WTC11 (cell line): ENCODE measurements at regions of chr10 and their contacts with region 1.

Region 1: DNA sequence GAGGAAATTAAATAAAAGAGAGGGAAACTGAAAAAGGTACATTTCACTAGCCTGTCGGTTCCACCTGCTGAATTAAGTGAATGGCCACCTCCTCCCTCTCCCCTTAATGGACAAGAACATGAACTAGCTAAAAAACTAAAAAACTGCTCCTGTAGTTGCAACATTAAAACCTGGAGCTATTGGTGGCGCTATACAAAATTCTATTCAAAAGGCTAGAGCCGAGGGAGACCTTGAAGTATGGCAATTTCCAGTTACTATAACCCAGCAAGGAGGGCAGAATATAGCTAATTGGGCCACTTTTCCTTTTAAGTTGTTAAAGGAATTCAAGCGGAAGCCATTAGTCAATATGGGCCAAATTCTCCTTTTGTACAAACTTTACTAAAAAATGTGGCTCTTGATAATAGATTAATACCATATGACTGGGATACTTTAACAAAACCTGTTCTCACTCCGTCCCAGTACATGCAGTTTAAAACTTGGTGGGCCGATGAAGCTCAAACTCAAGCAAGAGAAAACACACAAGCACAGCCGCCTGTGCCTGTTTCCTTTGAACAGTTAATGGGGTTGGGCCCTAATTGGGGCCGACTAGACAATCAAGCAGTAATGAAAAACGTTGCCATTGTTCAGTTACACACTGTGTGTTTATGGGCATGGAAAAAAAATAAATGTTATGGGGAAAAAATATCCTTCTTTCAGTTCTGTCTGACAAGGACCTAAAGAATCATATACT is 6.5 kb upstream of the CHST3 start:
- DNase-seq: no peak
- ATAC-seq: no peak
- H3K4me3 Mint-ChIP-seq: no peak overlapping the region
- H3K27ac Mint-ChIP-seq: no peak overlapping the region
- H3K4me1 Mint-ChIP-seq: peaks cover 11% of the 10 kb centered on the region
- H3K27me3 Mint-ChIP-seq: peaks cover 17% of the 10 kb centered on the region
- CTCF ChIP-seq: no peak

Region 2: GRCh38 chr10:71945819-71946474 is 11.8 kb before region 1 on chr10:
- CTCF ChIA-PET with region 1: interaction called, 27 read pairs
- POLR2A ChIA-PET with region 1: no interaction called
- DNase-seq: no peak
- ATAC-seq: no peak
- H3K4me3 Mint-ChIP-seq: no peak overlapping the region
- H3K27ac Mint-ChIP-seq: no peak overlapping the region
- H3K4me1 Mint-ChIP-seq: no peaks in the 10 kb centered on the region
- H3K27me3 Mint-ChIP-seq: peaks cover 21% of the 10 kb centered on the region
- CTCF ChIP-seq: no peak

Region 3: GRCh38 chr10:71974489-71975021 is 16.8 kb after region 1 on chr10:
- CTCF ChIA-PET with region 1: interaction called, 21 read pairs
- POLR2A ChIA-PET with region 1: no interaction called
- DNase-seq: no peak
- ATAC-seq: no peak
- H3K4me3 Mint-ChIP-seq: no peak overlapping the region
- H3K27ac Mint-ChIP-seq: no peak overlapping the region
- H3K4me1 Mint-ChIP-seq: peaks cover 20% of the 10 kb centered on the region
- H3K27me3 Mint-ChIP-seq: no peaks in the 10 kb centered on the region
- CTCF ChIP-seq: no peak

Region 4: DNA sequence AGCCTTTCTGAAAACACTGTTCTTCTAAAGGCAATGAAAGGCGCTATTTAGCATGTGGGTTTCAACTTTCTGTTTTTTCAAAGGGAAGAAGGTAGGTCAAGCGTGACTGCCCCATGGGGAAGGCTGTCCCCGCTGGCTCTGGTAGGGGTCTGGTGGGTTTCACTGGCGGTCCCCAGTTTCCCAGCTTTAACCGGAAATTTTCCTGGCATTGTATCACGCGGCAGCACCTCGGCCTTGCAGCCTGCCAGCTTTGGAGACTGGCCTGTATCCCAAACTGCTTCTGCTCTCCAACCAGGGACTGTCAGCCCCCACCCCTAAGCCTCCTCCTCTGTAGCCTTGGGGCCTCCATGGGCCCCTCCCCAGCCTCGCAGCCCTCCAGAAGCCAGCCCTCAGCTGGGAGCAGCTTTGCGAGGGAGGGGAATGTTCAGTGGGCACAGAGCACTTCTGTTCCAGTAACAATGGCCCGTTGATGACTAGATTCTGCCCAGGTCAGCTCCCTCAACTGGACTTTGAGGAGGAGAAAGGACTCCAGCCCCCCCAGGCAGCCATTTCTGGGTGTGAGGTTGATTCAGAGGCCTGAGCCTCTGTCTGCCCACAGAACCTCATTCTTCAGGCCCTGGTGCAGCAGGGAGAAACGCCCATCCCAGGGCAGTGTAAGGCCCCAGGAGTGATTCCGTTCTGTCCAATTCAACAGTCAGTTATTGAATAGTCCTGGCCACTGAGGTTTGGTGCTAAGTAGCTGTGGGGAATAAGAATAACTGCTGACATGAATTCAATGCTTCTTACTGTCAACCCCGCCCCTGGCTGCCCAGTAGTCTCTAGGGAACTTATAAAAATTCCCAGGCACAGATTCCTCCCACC is 23.5 kb after region 1 on chr10:
- CTCF ChIA-PET with region 1: interaction called, 21 read pairs
- POLR2A ChIA-PET with region 1: no interaction called
- DNase-seq: no peak
- ATAC-seq: no peak
- H3K4me3 Mint-ChIP-seq: no peak overlapping the region
- H3K27ac Mint-ChIP-seq: no peak overlapping the region
- H3K4me1 Mint-ChIP-seq: peaks cover 27% of the 10 kb centered on the region
- H3K27me3 Mint-ChIP-seq: no peaks in the 10 kb centered on the region
- CTCF ChIP-seq: no peak

Region 5: DNA sequence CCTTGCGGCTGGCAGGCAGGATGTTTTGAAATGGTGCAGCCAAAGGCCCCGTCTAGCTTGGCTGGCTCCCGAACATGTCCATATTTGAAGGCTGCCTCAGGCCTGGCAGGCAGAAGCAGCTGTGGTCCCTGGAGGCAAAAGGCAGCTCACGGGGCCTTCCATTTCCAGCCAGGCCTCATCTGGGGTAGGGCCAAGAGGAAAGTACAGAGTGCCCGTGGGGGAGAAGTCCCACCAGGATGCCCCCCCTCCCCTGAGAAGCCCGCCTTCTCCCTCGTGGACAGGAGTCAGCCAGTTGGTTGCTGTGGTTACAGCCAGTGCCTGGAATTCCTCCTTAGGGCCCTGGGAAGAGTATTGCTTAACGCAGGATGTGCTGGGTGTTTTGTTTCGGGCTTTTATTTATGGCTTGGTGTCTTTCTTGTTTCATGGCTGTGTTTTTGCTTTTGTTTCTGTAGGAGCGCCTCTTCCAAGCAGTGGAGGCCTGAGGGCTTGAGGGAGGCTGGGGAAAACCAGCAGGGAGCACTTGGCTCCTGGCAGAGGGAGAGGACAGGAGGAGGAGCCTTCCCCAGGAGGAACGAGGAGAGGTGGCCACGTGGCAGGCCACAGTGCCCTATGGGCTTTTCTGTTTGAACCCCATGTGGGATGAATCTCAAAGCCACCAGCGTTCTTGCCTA is 51.8 kb after region 1 on chr10:
- CTCF ChIA-PET with region 1: no interaction called
- POLR2A ChIA-PET with region 1: no interaction called
- DNase-seq: no peak
- ATAC-seq: peak; percentile 24; the same call in 1 of the 2 replicates
- H3K4me3 Mint-ChIP-seq: no peak overlapping the region
- H3K27ac Mint-ChIP-seq: peak overlapping the region; percentile 76; the same call in 1 of the 2 replicates
- H3K4me1 Mint-ChIP-seq: peaks cover 3% of the 10 kb centered on the region; the same call in 1 of the 2 replicates
- H3K27me3 Mint-ChIP-seq: no peaks in the 10 kb centered on the region
- CTCF ChIP-seq: no peak

Region 6: GRCh38 chr10:72069751-72070526 is 112.2 kb after region 1 on chr10:
- CTCF ChIA-PET with region 1: interaction called, 13 read pairs
- POLR2A ChIA-PET with region 1: no interaction called
- DNase-seq: peak; percentile 60
- ATAC-seq: peak; percentile 49
- H3K4me3 Mint-ChIP-seq: no peak overlapping the region
- H3K27ac Mint-ChIP-seq: no peak overlapping the region
- H3K4me1 Mint-ChIP-seq: peaks cover 5% of the 10 kb centered on the region
- H3K27me3 Mint-ChIP-seq: no peaks in the 10 kb centered on the region
- CTCF ChIP-seq: no peak; the same call in 1 of the 2 replicates